Naive thymus-derived CD4-positive, alpha-beta T cell (primary cell): ENCODE measurements at regions of chr10 and their contacts with region 1.

Region 1: DNA sequence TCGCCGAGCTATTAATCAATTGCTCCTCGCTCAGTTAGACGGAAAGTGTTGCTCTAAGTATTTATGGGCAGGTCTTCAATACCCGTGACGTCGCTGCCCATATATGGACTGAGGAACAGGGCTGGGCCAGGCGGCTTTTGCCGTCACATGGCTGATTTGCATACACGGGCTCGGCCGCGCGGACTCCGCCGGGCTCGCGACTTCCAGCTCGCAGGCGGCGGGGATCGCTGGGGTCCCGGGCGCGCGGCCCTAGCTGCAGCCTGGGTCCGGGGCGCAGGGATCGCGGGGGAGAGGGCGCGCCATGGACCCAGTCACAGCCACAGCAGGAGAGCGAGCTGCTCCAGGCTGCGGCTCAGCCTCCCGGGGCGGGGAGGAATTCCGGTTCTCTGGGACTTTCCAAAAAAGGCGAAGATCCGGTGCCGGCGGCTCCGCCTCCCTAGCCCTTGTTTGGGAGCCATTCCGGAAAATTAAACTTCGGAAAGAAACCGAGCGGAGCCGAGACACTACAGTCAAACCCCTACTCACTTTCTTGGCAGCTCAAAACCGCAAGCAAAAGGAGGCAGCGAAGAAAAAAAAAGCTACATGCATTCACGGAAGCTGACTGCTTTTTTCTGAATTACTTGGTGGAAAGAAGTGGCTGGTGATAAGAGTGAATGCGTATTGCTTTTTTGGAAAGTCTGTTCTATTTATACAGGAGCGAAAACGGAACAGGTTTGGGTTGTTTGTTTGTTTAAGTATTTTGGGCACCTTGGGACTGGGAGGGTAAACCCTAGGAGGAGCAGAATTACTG is at the start of gene EGR2:
- DNase-seq: peak; percentile 92 to 99 (median 98)
- ATAC-seq: peak; percentile 88
- H3K4me3 ChIP-seq: peak within 1 kb of the TSS; percentile 69
- H3K4me3 Mint-ChIP-seq: peak within 1 kb of the TSS; percentile 89 to 100 (median 98)
- H3K27ac ChIP-seq: peak within 1 kb of the TSS; percentile 76
- H3K27ac Mint-ChIP-seq: peak within 1 kb of the TSS; percentile 86 to 99 (median 95)
- H3K4me1 ChIP-seq: peaks cover 17 to 23% of the 10 kb centered on the region in 2 donors
- H3K4me1 Mint-ChIP-seq: peaks cover 36 to 62% (median 49%) of the 10 kb centered on the region in 7 donors
- H3K27me3 ChIP-seq: peaks cover 3 to 7% of the 10 kb centered on the region in 2 donors
- H3K27me3 Mint-ChIP-seq: peaks cover 26 to 74% (median 31%) of the 10 kb centered on the region in 5 donors
- total RNA-seq, gene EGR2: 0.46 to 14.2 (median 2.7) TPM

Region 2: DNA sequence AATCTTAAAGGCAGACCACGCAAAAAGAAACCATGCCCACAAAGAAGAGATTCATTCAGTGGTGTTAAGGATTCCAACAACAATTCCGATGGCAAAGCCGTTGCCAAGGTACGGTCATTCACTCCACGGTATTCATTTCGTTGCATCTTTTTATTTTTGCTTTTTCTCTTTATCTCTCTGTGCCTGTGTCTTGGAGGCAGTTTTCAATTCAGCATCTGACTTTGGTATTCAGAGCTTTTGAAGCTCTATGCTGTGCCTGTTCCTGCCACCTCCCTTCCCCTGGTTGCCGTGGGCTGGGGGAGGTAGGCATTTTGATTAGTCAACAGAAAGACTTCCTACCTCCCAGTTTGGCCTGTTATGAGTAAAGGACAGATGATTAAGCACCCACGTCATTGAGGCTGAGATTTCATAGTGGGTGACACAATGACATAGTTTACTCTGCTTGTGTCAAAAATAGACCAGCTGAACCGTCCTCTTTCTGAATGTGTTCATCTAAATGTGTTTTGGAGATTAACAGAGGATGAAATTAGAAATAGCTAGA is 765.6 kb before region 1 on chr10:
- CTCF ChIA-PET with region 1: no interaction called
- POLR2A ChIA-PET with region 1: no interaction called
- intact Hi-C with region 1: loop called (anchors 1 to 2 kb)
- DNase-seq: peak; percentile 25 to 88 (median 78)
- ATAC-seq: peak; percentile 86
- H3K4me3 ChIP-seq: peak overlapping the region; percentile 62
- H3K4me3 Mint-ChIP-seq: peak overlapping the region; percentile 81 to 94 (median 88)
- H3K27ac ChIP-seq: peak overlapping the region; percentile 77
- H3K27ac Mint-ChIP-seq: peak overlapping the region; percentile 91 to 100 (median 96)
- H3K4me1 ChIP-seq: peaks cover 59 to 63% of the 10 kb centered on the region in 2 donors
- H3K4me1 Mint-ChIP-seq: peaks cover 60 to 99% (median 96%) of the 10 kb centered on the region in 7 donors
- H3K27me3 ChIP-seq: no peaks in the 10 kb centered on the region
- H3K27me3 Mint-ChIP-seq: no peaks in the 10 kb centered on the region

Region 3: GRCh38 chr10:62528441-62528840 is 288.1 kb before region 1 on chr10:
- CTCF ChIA-PET with region 1: interaction called, 3 read pairs
- POLR2A ChIA-PET with region 1: interaction called, 3 read pairs
- intact Hi-C with region 1: loop called (anchors 1 to 2 kb)
- DNase-seq: peak in 7 of 9 donors; percentile 42 to 83 (median 78)
- ATAC-seq: peak; percentile 95
- H3K4me3 ChIP-seq: no peak overlapping the region
- H3K4me3 Mint-ChIP-seq: peak overlapping the region; percentile 0 to 78 (median 70)
- H3K27ac ChIP-seq: peak overlapping the region; percentile 44
- H3K27ac Mint-ChIP-seq: peak overlapping the region; percentile 47 to 86 (median 75)
- H3K4me1 ChIP-seq: peaks cover 24 to 39% of the 10 kb centered on the region in 2 donors
- H3K4me1 Mint-ChIP-seq: peaks cover 32 to 49% (median 43%) of the 10 kb centered on the region in 7 donors
- H3K27me3 ChIP-seq: no peaks in the 10 kb centered on the region
- H3K27me3 Mint-ChIP-seq: peaks cover 0 to 15% (median 0%) of the 10 kb centered on the region in 5 donors

Region 4: DNA sequence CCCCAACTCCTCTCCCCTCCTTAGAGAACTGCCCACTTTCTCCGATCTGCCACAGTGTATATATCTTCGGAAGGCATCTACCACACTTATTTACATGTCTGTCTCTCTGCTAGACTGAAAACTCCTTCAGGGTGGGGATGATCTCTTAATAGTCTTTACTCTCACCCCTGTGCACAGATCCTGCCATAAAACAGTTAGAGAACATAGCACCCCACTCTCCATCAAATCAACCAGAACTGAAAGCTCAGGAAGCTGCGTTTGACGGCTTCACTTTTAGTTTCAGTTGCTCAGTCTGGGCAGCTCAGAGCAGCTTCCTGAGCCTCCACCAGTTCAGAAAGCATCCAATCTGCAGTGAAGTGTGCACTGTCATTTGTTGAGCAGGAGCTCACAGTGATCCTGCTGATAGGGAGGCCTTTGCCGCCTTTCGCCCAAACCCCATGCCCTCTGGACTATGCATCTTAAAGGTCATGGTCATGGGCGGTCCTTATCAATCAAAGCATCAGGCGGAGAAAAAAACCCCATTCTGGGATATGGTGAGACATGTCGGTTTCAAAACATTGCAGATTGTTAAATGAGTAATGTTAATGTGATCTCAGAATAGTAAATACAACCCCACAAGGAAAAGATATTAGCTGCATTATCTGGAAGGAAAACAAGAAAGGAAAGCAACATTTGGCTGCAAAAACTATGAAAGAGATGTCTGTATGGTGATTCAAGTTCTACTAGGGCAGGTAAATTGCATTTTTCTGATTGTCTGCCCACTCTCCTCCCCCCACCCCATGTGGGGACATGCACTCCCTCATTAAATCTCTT is 179.1 kb before region 1 on chr10:
- CTCF ChIA-PET with region 1: interaction called, 21 read pairs
- POLR2A ChIA-PET with region 1: interaction called, 43 read pairs
- intact Hi-C with region 1: loop called (anchors 1 kb)
- DNase-seq: peak; percentile 32 to 82 (median 75)
- ATAC-seq: peak; percentile 86
- H3K4me3 ChIP-seq: peak overlapping the region; percentile 67
- H3K4me3 Mint-ChIP-seq: no peak overlapping the region
- H3K27ac ChIP-seq: peak overlapping the region; percentile 70
- H3K27ac Mint-ChIP-seq: no peak overlapping the region
- H3K4me1 ChIP-seq: peaks cover 18 to 41% of the 10 kb centered on the region in 2 donors
- H3K4me1 Mint-ChIP-seq: peaks cover 2 to 38% (median 6%) of the 10 kb centered on the region in 7 donors
- H3K27me3 ChIP-seq: no peaks in the 10 kb centered on the region
- H3K27me3 Mint-ChIP-seq: no peaks in the 10 kb centered on the region

Region 5: DNA sequence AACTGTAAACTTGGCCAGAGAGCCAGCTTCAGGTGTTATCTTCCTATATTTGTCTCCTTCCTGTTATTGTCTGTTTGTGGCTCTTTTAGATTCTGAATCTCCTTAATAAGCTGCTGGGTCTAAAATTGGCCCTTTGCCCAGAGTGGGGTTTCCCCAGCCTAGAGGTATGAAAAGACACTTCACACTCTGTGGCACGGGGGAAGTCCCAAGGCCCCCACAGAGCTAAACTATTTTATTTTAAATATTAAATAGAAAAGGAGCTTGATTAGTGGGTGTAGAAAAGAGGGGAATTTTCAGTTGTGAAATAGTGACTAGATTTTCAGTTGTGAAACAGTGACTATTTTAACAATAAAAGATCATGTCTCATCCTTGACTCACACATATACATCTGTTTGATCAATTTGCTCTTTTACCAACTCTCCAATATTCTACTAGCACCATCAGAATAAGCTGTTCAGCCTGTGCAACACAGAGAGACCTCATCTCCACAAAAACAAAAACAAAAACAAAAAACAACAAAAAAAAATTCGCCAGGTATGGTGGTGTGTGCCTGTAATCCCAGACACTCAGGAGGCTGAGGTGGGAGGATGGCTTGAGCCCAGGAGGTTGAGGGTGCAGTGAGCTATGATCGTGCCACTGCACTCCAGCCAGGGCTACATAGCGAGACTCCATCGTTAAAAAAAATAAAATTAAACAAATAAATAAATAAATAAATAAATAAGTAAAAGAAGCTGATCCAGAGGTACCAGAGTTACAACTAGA is 36.9 kb before region 1 on chr10:
- CTCF ChIA-PET with region 1: no interaction called
- POLR2A ChIA-PET with region 1: interaction called, 3 read pairs
- intact Hi-C with region 1: loop called in 1 of 2 experiments (anchors 1 kb)
- DNase-seq: peak; percentile 35 to 88 (median 75)
- ATAC-seq: peak; percentile 97
- H3K4me3 ChIP-seq: no peak overlapping the region
- H3K4me3 Mint-ChIP-seq: peak overlapping the region; percentile 0 to 71 (median 52)
- H3K27ac ChIP-seq: no peak overlapping the region
- H3K27ac Mint-ChIP-seq: peak overlapping the region in 6 of 9 donors; percentile 0 to 79 (median 8)
- H3K4me1 ChIP-seq: peaks cover 13 to 15% of the 10 kb centered on the region in 2 donors
- H3K4me1 Mint-ChIP-seq: peaks cover 10 to 22% (median 17%) of the 10 kb centered on the region in 7 donors
- H3K27me3 ChIP-seq: no peaks in the 10 kb centered on the region
- H3K27me3 Mint-ChIP-seq: peaks cover 0 to 38% (median 0%) of the 10 kb centered on the region in 5 donors

Region 6: DNA sequence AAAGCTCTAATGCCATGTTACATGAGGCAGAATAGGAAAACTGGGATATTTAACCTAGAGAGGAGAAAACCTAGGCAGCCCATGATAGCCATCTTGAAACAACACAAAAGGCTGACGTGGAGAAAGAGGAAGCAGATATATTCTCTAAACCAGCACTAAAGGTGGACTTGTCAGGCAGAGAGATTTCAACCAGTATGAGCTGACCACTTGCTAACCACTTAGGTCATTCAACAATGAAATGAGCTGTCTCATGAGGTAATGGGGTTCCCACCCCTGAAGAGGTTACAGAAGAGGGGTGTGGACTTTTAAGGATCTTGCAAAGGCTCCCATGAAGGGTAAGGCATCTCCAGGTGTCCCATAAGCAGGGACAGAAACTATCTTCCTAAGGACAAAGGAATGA is 26.5 kb after region 1 on chr10:
- CTCF ChIA-PET with region 1: no interaction called
- POLR2A ChIA-PET with region 1: no interaction called
- intact Hi-C with region 1: no loop called
- DNase-seq: no peak
- ATAC-seq: no peak
- H3K4me3 ChIP-seq: no peak overlapping the region
- H3K4me3 Mint-ChIP-seq: no peak overlapping the region
- H3K27ac ChIP-seq: no peak overlapping the region
- H3K27ac Mint-ChIP-seq: no peak overlapping the region
- H3K4me1 ChIP-seq: no peaks in the 10 kb centered on the region
- H3K4me1 Mint-ChIP-seq: peaks cover 4 to 25% (median 15%) of the 10 kb centered on the region in 7 donors
- H3K27me3 ChIP-seq: no peaks in the 10 kb centered on the region
- H3K27me3 Mint-ChIP-seq: peaks cover 0 to 17% (median 4%) of the 10 kb centered on the region in 5 donors

Region 7: DNA sequence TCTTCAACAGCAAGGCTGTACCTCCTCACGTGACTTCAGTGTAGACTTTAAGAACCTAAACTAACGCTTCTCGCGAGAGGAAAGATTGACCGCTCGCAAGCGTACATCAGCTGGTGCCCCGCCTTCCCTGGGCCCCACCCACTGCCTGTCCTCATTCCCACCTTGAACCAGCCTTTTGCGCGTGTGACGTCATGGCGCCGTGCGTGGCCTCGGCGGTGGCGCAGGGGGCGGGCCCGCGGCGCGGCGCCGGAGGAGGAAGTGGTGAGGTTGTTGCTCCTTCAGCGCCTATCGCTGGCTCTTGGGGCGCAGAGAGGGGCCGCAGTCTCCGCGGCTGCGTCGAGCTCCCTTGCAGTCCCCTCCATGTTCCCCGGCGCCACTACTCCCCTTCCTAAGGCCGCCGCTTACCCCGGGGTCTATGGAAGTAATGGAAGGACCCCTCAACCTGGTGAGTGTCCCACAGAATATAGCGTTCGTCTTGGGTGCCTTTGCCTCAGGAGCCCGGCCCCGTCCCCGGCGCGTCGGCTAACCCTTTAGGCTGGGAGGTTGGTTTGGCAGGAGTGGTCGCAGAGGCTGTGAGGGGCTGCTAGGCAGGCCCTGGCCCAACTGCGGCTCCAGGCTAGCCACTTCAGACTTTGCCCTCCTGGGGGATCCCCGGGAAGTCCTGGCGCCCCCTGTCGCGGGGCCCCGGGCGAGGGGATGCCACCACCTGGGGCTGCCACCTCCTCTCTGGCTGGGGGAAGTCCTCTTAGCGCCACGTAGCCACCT is 316.7 kb after region 1 on chr10 and contains the start of gene NRBF2:
- CTCF ChIA-PET with region 1: no interaction called
- POLR2A ChIA-PET with region 1: interaction called, 15 read pairs
- intact Hi-C with region 1: loop called (anchors 1 kb)
- DNase-seq: peak; percentile 96 to 98 (median 98)
- ATAC-seq: peak; percentile 94
- H3K4me3 ChIP-seq: peak within 1 kb of the TSS; percentile 81
- H3K4me3 Mint-ChIP-seq: peak within 1 kb of the TSS; percentile 75 to 94 (median 92)
- H3K27ac ChIP-seq: peak within 1 kb of the TSS; percentile 98
- H3K27ac Mint-ChIP-seq: peak within 1 kb of the TSS; percentile 89 to 98 (median 96)
- H3K4me1 ChIP-seq: peaks cover 17 to 30% of the 10 kb centered on the region in 2 donors
- H3K4me1 Mint-ChIP-seq: peaks cover 10 to 49% (median 32%) of the 10 kb centered on the region in 7 donors
- H3K27me3 ChIP-seq: no peaks in the 10 kb centered on the region
- H3K27me3 Mint-ChIP-seq: no peaks in the 10 kb centered on the region
- total RNA-seq, gene NRBF2: 14.5 to 26.0 (median 19.2) TPM

Region 8: GRCh38 chr10:63720072-63720537 is 903.6 kb after region 1 on chr10:
- CTCF ChIA-PET with region 1: interaction called, 4 read pairs
- POLR2A ChIA-PET with region 1: no interaction called
- intact Hi-C with region 1: loop called (anchors 2 to 5 kb)
- DNase-seq: peak in 8 of 9 donors; percentile 33 to 74 (median 63)
- ATAC-seq: peak; percentile 87
- H3K4me3 ChIP-seq: no peak overlapping the region
- H3K4me3 Mint-ChIP-seq: peak overlapping the region in 3 of 10 donors; percentile 8 to 63 (median 16)
- H3K27ac ChIP-seq: no peak overlapping the region
- H3K27ac Mint-ChIP-seq: peak overlapping the region in 5 of 9 donors; percentile 1 to 71 (median 68)
- H3K4me1 ChIP-seq: no peaks in the 10 kb centered on the region
- H3K4me1 Mint-ChIP-seq: peaks cover 0 to 22% (median 7%) of the 10 kb centered on the region in 7 donors
- H3K27me3 ChIP-seq: no peaks in the 10 kb centered on the region
- H3K27me3 Mint-ChIP-seq: peaks cover 2 to 11% (median 3%) of the 10 kb centered on the region in 5 donors